Ascending aorta (tissue), 2 donors: ENCODE measurements at regions of chr11 and their contacts with region 1.

Region 1: GRCh38 chr11:75399344-75400145 is at the start of gene RPS3:
- DNase-seq: peak; percentile 70 to 95
- H3K4me3 ChIP-seq: peak within 1 kb of the TSS; percentile 70 to 78
- H3K27ac ChIP-seq: peak within 1 kb of the TSS; percentile 91 to 98
- H3K4me1 ChIP-seq: peaks cover 0 to 6% of the 10 kb centered on the region in 2 donors
- H3K27me3 ChIP-seq: no peaks in the 10 kb centered on the region
- CTCF ChIP-seq: no peak
- total RNA-seq, gene RPS3: 511 TPM

Region 2: DNA sequence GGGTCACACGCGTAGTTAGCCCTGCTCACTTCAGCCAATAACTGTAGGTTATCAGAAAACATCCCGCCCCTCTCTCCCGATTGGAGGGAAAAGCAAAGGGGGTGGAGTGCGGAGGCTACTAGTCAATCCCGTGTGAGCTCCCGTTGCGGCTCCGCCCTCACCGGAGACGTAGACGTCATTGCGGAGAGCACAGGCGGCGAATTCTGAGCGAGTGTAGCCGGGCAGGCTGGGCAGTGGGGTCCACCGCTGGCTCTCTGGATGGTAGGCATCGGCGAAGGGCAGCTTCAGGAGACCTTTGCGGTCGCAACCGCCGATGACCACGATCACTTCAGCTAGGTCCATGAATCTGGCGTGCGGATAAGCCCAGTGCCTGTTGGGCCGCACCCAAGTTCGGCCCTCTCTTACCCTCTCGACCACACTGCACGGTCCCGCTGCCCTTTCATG is 28.8 kb after region 1 on chr11:
- intact Hi-C with region 1: loop called (anchors 5 kb)
- DNase-seq: peak; percentile 82 to 95
- H3K4me3 ChIP-seq: peak overlapping the region; percentile 37 to 53
- H3K27ac ChIP-seq: peak overlapping the region; percentile 60 to 77
- H3K4me1 ChIP-seq: peaks cover 2 to 9% of the 10 kb centered on the region in 2 donors
- H3K27me3 ChIP-seq: no peaks in the 10 kb centered on the region
- CTCF ChIP-seq: no peak

Region 3: GRCh38 chr11:75597636-75598035 is 198.1 kb after region 1 on chr11:
- intact Hi-C with region 1: no loop called
- DNase-seq: no peak
- H3K4me3 ChIP-seq: no peak overlapping the region
- H3K27ac ChIP-seq: no peak overlapping the region
- H3K4me1 ChIP-seq: no peaks in the 10 kb centered on the region
- H3K27me3 ChIP-seq: no peaks in the 10 kb centered on the region
- CTCF ChIP-seq: peak in 1 of 3 experiments; percentile 13